Activated CD4-positive, alpha-beta memory T cell treated with anti-CD3 and anti-CD28 coated beads for 36 hours (primary cell): ENCODE measurements at regions of chr4 and their contacts with region 1.

Region 1: DNA sequence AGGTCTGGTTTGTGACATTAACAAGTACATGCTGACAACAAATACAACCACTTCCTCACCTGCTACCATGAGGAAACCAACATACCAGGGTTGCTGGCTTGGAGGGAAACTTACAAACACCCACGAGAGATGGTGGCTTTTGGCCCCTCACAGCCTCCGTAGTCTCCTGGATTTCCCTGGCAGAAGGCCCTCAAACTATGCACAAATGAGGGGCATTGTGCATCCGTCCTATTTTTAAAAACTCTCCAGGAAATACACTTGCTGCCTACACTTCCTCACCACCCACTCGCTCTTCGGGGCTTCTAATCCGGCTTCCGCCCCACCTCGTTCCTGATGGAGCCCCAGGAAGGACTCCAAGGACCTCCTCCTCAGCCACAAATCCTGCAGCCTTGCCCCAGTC is 355.0 kb upstream of the GATB start:
- DNase-seq: peak; percentile 60
- H3K4me3 Mint-ChIP-seq: peak overlapping the region; percentile 30
- H3K27ac Mint-ChIP-seq: peak overlapping the region; percentile 70
- H3K4me1 Mint-ChIP-seq: peaks cover 40% of the 10 kb centered on the region
- H3K27me3 Mint-ChIP-seq: no peaks in the 10 kb centered on the region

Region 2: GRCh38 chr4:152079543-152080293 is 36.1 kb before region 1 on chr4:
- CTCF ChIA-PET with region 1: no interaction called
- POLR2A ChIA-PET with region 1: no interaction called
- intact Hi-C with region 1: loop called (anchors 5 kb)
- DNase-seq: peak; percentile 71
- H3K4me3 Mint-ChIP-seq: peak overlapping the region; percentile 24
- H3K27ac Mint-ChIP-seq: peak overlapping the region; percentile 78
- H3K4me1 Mint-ChIP-seq: peaks cover 54% of the 10 kb centered on the region
- H3K27me3 Mint-ChIP-seq: no peaks in the 10 kb centered on the region

Region 3: GRCh38 chr4:152185786-152186550 is 70.2 kb after region 1 on chr4:
- CTCF ChIA-PET with region 1: no interaction called
- POLR2A ChIA-PET with region 1: no interaction called
- intact Hi-C with region 1: no loop called
- DNase-seq: no peak
- H3K4me3 Mint-ChIP-seq: no peak overlapping the region
- H3K27ac Mint-ChIP-seq: no peak overlapping the region
- H3K4me1 Mint-ChIP-seq: peaks cover 27% of the 10 kb centered on the region
- H3K27me3 Mint-ChIP-seq: no peaks in the 10 kb centered on the region